ENCODE measurements at regions of chr12 and their contacts with region 1.

Region 1: DNA sequence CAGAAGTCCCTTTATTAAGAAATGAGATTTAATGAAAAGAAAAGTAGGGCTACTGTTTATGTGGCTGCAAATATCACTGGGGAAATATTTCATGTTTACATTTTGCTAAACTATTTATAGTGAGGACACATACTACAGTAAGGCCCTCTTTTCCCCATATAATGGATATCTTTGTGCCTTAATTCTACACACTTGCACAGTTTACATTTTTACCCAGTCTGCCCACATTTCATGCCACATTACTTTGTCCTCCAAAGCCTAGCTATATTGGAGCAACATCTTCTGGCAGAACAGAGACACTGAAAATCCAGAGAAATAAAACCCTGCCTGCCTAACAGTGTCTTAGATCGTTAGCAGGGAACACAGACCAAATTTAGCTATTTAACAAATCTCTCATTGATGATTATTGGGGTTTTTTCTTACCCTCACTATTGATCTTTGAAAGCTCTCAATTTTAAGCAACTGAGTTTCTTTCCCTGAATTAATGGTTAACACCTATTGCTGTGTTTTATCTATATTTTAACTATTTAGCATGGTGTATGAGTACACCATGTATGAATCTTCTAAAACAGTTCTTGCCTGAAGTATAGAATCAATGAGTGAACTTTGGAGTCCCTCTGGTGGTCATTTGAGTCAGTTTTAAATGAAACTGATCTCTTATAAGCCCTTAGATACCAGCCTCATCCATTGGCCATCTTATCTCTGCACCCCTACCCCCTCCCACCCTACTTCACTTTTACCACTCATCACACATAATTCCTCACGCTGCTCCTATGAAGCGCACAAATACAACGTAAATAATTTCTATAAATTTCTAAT is 170.2 kb downstream of the BCAT1 start:
- DNase-seq: no peak
- ATAC-seq: peak; percentile 95
- H3K4me3 Mint-ChIP-seq: no peak overlapping the region
- H3K27ac Mint-ChIP-seq: peak overlapping the region; percentile 50
- H3K4me1 Mint-ChIP-seq: peaks cover 34% of the 10 kb centered on the region
- H3K27me3 Mint-ChIP-seq: no peaks in the 10 kb centered on the region
- CTCF ChIP-seq: peak; percentile 61

Region 2: GRCh38 chr12:23204933-23205778 is 1573.5 kb before region 1 on chr12:
- CTCF ChIA-PET with region 1: interaction called, 12 read pairs
- POLR2A ChIA-PET with region 1: no interaction called
- intact Hi-C with region 1: loop called (anchors 1 kb)
- DNase-seq: no peak
- ATAC-seq: peak; percentile 92
- H3K4me3 Mint-ChIP-seq: no peak overlapping the region
- H3K27ac Mint-ChIP-seq: no peak overlapping the region
- H3K4me1 Mint-ChIP-seq: no peaks in the 10 kb centered on the region
- H3K27me3 Mint-ChIP-seq: peaks cover 5% of the 10 kb centered on the region
- CTCF ChIP-seq: peak; percentile 68

Region 3: GRCh38 chr12:24268663-24269186 is 510.0 kb before region 1 on chr12:
- CTCF ChIA-PET with region 1: no interaction called
- POLR2A ChIA-PET with region 1: no interaction called
- intact Hi-C with region 1: loop called (anchors 1 kb)
- DNase-seq: no peak
- ATAC-seq: no peak
- H3K4me3 Mint-ChIP-seq: no peak overlapping the region
- H3K27ac Mint-ChIP-seq: no peak overlapping the region
- H3K4me1 Mint-ChIP-seq: no peaks in the 10 kb centered on the region
- H3K27me3 Mint-ChIP-seq: no peaks in the 10 kb centered on the region
- CTCF ChIP-seq: no peak

Region 4: GRCh38 chr12:24414480-24414879 is 364.2 kb before region 1 on chr12:
- CTCF ChIA-PET with region 1: interaction called, 4 read pairs
- POLR2A ChIA-PET with region 1: no interaction called
- intact Hi-C with region 1: loop called (anchors 5 kb)
- DNase-seq: no peak
- ATAC-seq: peak; percentile 36
- H3K4me3 Mint-ChIP-seq: peak overlapping the region; percentile 80
- H3K27ac Mint-ChIP-seq: peak overlapping the region; percentile 89
- H3K4me1 Mint-ChIP-seq: peaks cover 61% of the 10 kb centered on the region
- H3K27me3 Mint-ChIP-seq: no peaks in the 10 kb centered on the region
- CTCF ChIP-seq: no peak

Region 5: GRCh38 chr12:24705741-24706358 is 72.8 kb before region 1 on chr12:
- CTCF ChIA-PET with region 1: interaction called, 7 read pairs
- POLR2A ChIA-PET with region 1: interaction called, 5 read pairs
- intact Hi-C with region 1: loop called (anchors 2 kb)
- DNase-seq: no peak
- ATAC-seq: peak; percentile 91
- H3K4me3 Mint-ChIP-seq: peak overlapping the region; percentile 66
- H3K27ac Mint-ChIP-seq: peak overlapping the region; percentile 81
- H3K4me1 Mint-ChIP-seq: peaks cover 51% of the 10 kb centered on the region
- H3K27me3 Mint-ChIP-seq: no peaks in the 10 kb centered on the region
- CTCF ChIP-seq: no peak

Region 6: GRCh38 chr12:25052196-25052913 is 273.7 kb after region 1 on chr12:
- CTCF ChIA-PET with region 1: no interaction called
- POLR2A ChIA-PET with region 1: no interaction called
- intact Hi-C with region 1: no loop called
- DNase-seq: peak; percentile 68
- ATAC-seq: peak; percentile 87
- H3K4me3 Mint-ChIP-seq: peak overlapping the region; percentile 95
- H3K27ac Mint-ChIP-seq: peak overlapping the region; percentile 96
- H3K4me1 Mint-ChIP-seq: peaks cover 48% of the 10 kb centered on the region
- H3K27me3 Mint-ChIP-seq: no peaks in the 10 kb centered on the region
- CTCF ChIP-seq: no peak

Region 7: GRCh38 chr12:25130741-25131188 is 352.1 kb after region 1 on chr12:
- CTCF ChIA-PET with region 1: no interaction called
- POLR2A ChIA-PET with region 1: no interaction called
- intact Hi-C with region 1: loop called (anchors 1 kb)
- DNase-seq: no peak
- ATAC-seq: peak; percentile 54
- H3K4me3 Mint-ChIP-seq: no peak overlapping the region
- H3K27ac Mint-ChIP-seq: no peak overlapping the region
- H3K4me1 Mint-ChIP-seq: peaks cover 7% of the 10 kb centered on the region
- H3K27me3 Mint-ChIP-seq: no peaks in the 10 kb centered on the region
- CTCF ChIP-seq: no peak